ENCODE measurements at regions of chr19 and their contacts with region 1.

Region 1: GRCh38 chr19:9885077-9885552 is 50.0 kb downstream of the PIN1 start:
- DNase-seq: no peak
- H3K4me3 ChIP-seq: no peak overlapping the region
- H3K27ac ChIP-seq: no peak overlapping the region
- H3K4me1 ChIP-seq: peaks cover 0 to 8% (median 0%) of the 10 kb centered on the region in 4 experiments; a peak in 4 of 7 replicates
- H3K27me3 ChIP-seq: no peaks in the 10 kb centered on the region
- CTCF ChIP-seq: peak; percentile 29 to 54 (median 33); a peak in 3 of 4 replicates
- EP300 ChIP-seq: no peak
- POLR2A ChIP-seq: no peak
- RAD21 ChIP-seq: peak in 1 of 2 experiments; percentile 36; a peak in 1 of 4 replicates

Region 2: GRCh38 chr19:9906475-9907087 is 21.5 kb after region 1 on chr19:
- CTCF ChIA-PET with region 1: interaction called, 25 read pairs
- POLR2A ChIA-PET with region 1: interaction called, 3 read pairs
- DNase-seq: no peak
- H3K4me3 ChIP-seq: no peak overlapping the region
- H3K27ac ChIP-seq: no peak overlapping the region
- H3K4me1 ChIP-seq: peaks cover 0 to 2% (median 0%) of the 10 kb centered on the region in 4 experiments; a peak in 1 of 7 replicates
- H3K27me3 ChIP-seq: no peaks in the 10 kb centered on the region
- CTCF ChIP-seq: no peak
- EP300 ChIP-seq: no peak
- POLR2A ChIP-seq: no peak
- RAD21 ChIP-seq: no peak

Region 3: DNA sequence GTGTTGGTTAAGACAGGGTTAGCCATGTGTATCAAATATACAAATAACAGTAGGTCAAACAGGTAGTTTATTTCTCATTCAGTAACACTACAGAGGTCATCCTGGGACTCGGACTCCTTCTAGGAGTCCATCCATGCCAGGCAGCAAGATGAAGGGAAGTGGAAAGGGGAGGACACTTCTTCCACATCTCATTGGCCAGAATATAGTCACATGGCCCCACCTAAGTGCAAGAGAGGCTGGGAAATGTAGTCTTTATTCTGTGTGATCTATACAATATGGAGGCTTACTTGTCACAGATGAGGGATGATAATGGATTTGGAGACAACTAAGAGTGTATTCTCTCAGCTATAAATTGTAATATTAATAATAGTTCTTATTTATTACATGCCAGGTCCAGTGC is 159.3 kb after region 1 on chr19:
- CTCF ChIA-PET with region 1: no interaction called
- POLR2A ChIA-PET with region 1: no interaction called
- DNase-seq: no peak
- H3K4me3 ChIP-seq: no peak overlapping the region
- H3K27ac ChIP-seq: no peak overlapping the region
- H3K4me1 ChIP-seq: no peaks in the 10 kb centered on the region
- H3K27me3 ChIP-seq: no peaks in the 10 kb centered on the region
- CTCF ChIP-seq: no peak
- EP300 ChIP-seq: no peak
- POLR2A ChIP-seq: no peak
- RAD21 ChIP-seq: no peak

Measured in H1 (cell line).